MCF 10A (cell line): ENCODE measurements at regions of chr17 and their contacts with region 1.

Region 1: GRCh38 chr17:40510328-40510648 is 8.9 kb upstream of the TNS4 start:
- DNase-seq: peak; percentile 99
- H3K4me3 Mint-ChIP-seq: peak overlapping the region; percentile 48
- H3K27ac Mint-ChIP-seq: peak overlapping the region; percentile 95
- H3K4me1 Mint-ChIP-seq: peaks cover 56% of the 10 kb centered on the region
- H3K27me3 Mint-ChIP-seq: no peaks in the 10 kb centered on the region
- CTCF ChIP-seq: no peak

Region 2: DNA sequence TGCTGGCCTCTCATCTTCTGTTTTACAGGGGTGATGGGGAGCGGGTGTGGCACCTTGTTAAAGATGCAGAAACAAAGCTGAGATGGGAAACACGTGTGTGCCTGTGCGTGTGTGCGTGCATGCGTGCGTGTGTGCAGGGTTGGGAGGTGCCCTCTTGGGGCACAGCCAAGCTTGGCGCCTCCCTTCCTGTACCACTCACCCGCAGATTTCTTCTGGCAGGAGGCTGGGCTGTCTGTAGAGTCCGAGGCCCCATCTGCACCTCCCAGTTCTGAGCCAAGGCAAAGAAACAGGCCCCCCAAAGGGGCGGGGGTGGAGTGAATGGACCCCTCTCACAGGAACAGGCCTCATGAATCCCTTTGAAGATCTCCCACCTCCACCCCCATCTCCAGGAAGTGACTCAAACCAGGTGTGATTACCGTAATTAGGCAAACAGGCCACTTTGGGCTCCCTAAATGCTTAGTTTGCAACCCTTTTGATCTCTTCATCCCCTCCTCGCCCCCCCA is 29.7 kb before region 1 on chr17:
- CTCF ChIA-PET with region 1: interaction called, 5 read pairs
- POLR2A ChIA-PET with region 1: interaction called, 48 read pairs
- intact Hi-C with region 1: no loop called
- DNase-seq: peak; percentile 73
- H3K4me3 Mint-ChIP-seq: no peak overlapping the region
- H3K27ac Mint-ChIP-seq: peak overlapping the region; percentile 89
- H3K4me1 Mint-ChIP-seq: peaks cover 68% of the 10 kb centered on the region
- H3K27me3 Mint-ChIP-seq: no peaks in the 10 kb centered on the region
- CTCF ChIP-seq: no peak

Region 3: GRCh38 chr17:40522250-40522952 is 12.1 kb after region 1 on chr17:
- CTCF ChIA-PET with region 1: interaction called, 7 read pairs
- POLR2A ChIA-PET with region 1: interaction called, 110 read pairs
- intact Hi-C with region 1: loop called (anchors 1 kb)
- DNase-seq: peak; percentile 53
- H3K4me3 Mint-ChIP-seq: peak overlapping the region; percentile 62
- H3K27ac Mint-ChIP-seq: peak overlapping the region; percentile 99
- H3K4me1 Mint-ChIP-seq: peaks cover 57% of the 10 kb centered on the region
- H3K27me3 Mint-ChIP-seq: no peaks in the 10 kb centered on the region
- CTCF ChIP-seq: no peak

Region 4: DNA sequence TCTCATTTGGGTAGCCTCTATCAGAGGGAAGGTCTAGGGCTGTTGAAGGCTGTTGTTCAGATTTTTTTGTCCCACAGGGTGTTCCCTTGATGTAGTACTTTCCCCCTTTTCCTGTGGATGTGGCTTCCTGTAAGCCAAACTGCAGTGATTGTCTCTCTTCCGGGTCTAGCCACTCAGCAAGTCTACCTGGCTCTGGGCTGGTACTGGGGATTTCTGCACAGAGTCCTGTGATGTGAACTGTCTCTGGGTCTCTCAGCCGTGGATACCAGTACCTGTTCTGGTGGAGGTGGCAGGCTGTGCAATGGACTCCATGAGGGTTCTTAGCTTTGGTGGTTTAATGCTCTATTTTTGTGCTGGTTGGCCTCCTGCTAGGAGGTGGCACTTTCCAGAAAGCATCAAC is 78.3 kb after region 1 on chr17:
- CTCF ChIA-PET with region 1: no interaction called
- POLR2A ChIA-PET with region 1: no interaction called
- intact Hi-C with region 1: no loop called
- DNase-seq: no peak
- H3K4me3 Mint-ChIP-seq: no peak overlapping the region
- H3K27ac Mint-ChIP-seq: no peak overlapping the region
- H3K4me1 Mint-ChIP-seq: no peaks in the 10 kb centered on the region
- H3K27me3 Mint-ChIP-seq: peaks cover 57% of the 10 kb centered on the region
- CTCF ChIP-seq: no peak

Region 5: DNA sequence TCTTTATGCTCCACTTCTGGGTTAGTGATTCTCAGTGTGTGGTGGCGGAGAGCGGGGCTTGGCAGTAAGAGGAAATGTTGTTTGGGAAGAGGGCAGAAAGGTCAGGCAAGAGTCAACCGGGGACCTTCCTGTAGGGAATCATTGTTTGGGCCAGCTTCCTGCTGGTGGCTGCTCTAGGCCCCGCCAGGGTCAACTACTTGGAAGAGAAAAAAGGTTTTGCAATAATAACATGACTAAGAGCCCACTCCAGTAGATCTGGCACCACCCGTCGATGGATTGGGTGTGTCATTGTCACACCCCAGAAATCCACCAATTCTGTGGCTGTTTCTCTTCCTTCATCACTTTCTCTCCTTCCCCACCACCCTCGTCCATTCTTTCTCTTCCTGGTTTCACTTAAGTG is 197.4 kb after region 1 on chr17:
- CTCF ChIA-PET with region 1: no interaction called
- POLR2A ChIA-PET with region 1: no interaction called
- intact Hi-C with region 1: no loop called
- DNase-seq: peak; percentile 74
- H3K4me3 Mint-ChIP-seq: no peak overlapping the region
- H3K27ac Mint-ChIP-seq: peak overlapping the region; percentile 84
- H3K4me1 Mint-ChIP-seq: peaks cover 30% of the 10 kb centered on the region
- H3K27me3 Mint-ChIP-seq: no peaks in the 10 kb centered on the region
- CTCF ChIP-seq: no peak